Panc1 (cell line): ENCODE measurements at regions of chr7 and their contacts with region 1.

Region 1: DNA sequence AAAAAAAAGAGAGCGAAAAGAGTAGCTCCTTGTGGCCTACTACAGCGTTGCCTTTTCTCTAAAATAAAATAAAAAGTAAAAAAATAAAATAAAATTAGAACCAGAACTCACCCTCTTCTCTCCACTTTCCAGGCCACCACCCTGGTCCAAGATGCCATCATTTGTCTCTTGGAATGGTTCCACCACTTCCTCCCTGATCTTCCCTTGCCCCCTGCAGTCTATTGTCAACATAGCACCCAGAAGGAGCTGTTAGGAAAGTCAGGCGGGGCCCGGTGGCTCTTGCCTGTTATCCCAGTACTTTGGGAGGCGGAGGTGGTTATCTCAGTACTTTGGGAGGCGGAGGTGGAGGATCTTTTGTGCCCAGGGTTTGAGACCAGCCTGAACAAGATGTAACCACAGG is 7.6 kb upstream of the GRID2IP start:
- DNase-seq: no peak
- ATAC-seq: peak; percentile 80
- H3K4me3 ChIP-seq: no peak overlapping the region
- H3K27ac ChIP-seq: no peak overlapping the region
- H3K4me1 ChIP-seq: no peaks in the 10 kb centered on the region
- H3K27me3 ChIP-seq: no peaks in the 10 kb centered on the region
- CTCF ChIP-seq: no peak; the same call in 1 of the 2 replicates

Region 2: GRCh38 chr7:5053175-5053574 is 1505.7 kb before region 1 on chr7:
- CTCF ChIA-PET with region 1: no interaction called
- POLR2A ChIA-PET with region 1: no interaction called
- in situ Hi-C with region 1: no loop called
- intact Hi-C with region 1: no loop called
- DNase-seq: no peak
- ATAC-seq: no peak
- H3K4me3 ChIP-seq: no peak overlapping the region
- H3K27ac ChIP-seq: no peak overlapping the region
- H3K4me1 ChIP-seq: no peaks in the 10 kb centered on the region
- H3K27me3 ChIP-seq: no peaks in the 10 kb centered on the region
- CTCF ChIP-seq: no peak

Region 3: DNA sequence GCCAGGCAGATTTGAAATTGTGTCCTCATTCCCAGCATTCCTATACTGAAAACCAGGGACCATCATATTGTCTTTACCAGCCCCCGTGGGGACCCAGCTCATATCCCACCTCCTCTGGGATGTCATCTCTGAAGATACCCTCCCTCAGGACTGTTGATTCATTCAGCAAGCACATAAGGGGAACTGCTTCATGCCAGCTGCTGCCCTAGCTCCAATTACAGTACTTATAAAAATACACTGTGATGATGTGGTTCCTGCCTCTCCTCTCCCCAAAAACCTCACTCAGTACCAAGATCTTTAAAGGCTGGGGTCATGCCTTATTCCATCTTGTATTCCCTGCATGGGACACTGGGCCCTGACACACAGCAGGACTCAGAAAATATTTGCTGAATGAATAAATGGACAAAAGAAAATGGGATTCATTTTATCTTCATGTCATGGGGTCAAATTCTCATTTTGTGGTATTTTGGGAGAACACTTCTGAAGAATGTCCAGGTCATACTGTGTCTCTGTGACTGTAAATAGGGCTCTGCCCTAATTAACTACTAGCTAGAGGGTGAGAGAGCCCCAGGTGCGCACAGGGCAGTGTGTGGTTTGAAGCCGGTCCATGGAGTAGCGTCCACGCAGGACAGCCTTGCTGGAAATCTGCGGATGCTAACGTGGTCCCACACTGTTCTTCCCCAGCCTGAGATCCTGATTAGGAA is 82.1 kb before region 1 on chr7:
- CTCF ChIA-PET with region 1: no interaction called
- POLR2A ChIA-PET with region 1: no interaction called
- in situ Hi-C with region 1: no loop called
- intact Hi-C with region 1: no loop called
- DNase-seq: no peak
- ATAC-seq: peak; percentile 43; the same call in 1 of the 2 replicates
- H3K4me3 ChIP-seq: no peak overlapping the region
- H3K27ac ChIP-seq: no peak overlapping the region
- H3K4me1 ChIP-seq: peaks cover 3% of the 10 kb centered on the region
- H3K27me3 ChIP-seq: no peaks in the 10 kb centered on the region
- CTCF ChIP-seq: no peak

Region 4: DNA sequence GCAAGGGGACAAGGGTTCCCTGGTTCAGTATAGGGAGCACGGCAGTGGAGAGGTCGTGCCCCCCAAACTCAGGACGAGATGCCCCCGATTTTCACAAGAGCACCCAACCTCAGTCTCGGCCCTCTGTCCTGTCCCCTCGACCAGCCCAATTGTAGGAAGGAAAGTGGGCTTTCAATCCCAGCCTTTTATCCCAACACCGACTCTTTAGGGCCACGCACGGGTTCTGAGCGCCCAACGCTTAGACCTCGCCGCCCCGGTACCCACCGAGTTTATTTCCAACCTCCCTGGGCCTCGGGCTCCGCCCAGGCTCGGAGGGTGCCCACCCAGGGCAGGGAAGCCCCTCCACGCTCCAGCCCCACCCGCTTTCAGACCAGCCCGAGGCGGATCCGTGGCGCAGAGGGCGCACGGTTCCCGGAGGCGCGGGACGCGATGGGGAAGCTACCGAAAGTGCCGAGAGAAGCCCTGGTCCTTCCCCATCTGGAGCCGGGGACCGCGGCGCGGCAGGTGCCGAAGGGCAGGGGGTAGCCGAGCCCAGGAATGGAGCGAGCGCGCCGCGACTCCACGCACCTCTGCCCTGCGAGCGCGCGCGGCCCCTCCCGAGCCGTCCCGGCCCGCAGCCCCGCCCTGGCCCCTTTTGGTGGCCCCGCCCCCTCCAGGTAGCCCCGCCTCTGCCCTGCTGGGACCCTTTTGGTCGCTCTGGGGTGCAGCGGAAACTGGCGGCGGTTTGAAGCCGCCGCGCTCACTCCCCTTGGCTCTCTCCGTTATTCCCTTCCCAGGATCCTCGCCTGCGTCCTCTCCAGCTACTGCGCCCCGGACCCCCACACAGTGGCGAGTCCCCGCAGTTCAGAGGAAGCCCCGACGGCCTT is 28.0 kb before region 1 on chr7:
- CTCF ChIA-PET with region 1: interaction called, 16 read pairs
- POLR2A ChIA-PET with region 1: no interaction called
- in situ Hi-C with region 1: no loop called
- intact Hi-C with region 1: no loop called
- DNase-seq: no peak
- ATAC-seq: peak; percentile 33
- H3K4me3 ChIP-seq: peak overlapping the region; percentile 49 to 63
- H3K27ac ChIP-seq: no peak overlapping the region
- H3K4me1 ChIP-seq: peaks cover 4% of the 10 kb centered on the region; the same call in 1 of the 2 replicates
- H3K27me3 ChIP-seq: peaks cover 6% of the 10 kb centered on the region; the same call in 1 of the 2 replicates
- CTCF ChIP-seq: no peak

Region 5: DNA sequence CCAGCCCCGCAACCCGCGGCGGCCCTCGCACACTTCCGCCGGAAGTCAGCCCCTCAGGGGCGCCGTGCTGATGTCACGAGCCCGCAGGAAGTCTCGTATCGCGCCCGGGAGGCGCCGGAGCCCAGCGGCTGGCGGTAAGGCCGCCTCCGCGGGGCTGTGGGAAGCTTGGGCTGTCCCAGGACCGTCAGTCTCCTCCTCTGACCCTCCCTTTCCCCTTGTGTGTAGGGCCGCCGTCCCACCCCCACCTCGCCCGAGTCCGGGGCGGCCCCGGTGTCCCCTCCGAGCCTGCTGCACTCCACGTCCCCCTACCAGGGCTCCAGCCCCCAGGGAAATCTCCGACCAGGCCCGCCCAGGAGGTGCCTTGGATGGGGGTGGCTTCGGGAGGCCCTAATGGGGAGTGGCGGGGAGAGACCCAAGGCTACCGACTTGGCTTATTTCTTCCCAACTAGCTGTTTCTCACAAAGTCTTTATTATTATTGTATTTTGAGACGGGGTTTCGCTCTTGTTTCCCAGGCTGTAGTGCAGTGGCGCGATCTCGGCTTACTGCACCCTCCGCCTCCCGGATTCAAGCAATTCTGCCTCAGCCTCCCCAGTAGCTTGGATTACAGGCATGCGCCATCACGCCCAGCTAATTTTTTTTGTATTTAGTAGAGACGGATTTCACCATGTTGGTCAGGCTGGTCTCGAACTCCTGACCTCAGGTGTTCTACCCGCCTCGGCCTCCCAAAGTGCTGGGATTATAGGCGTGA is 18.7 kb after region 1 on chr7 and contains the start of gene ZDHHC4:
- CTCF ChIA-PET with region 1: interaction called, 12 read pairs
- POLR2A ChIA-PET with region 1: no interaction called
- in situ Hi-C with region 1: no loop called
- intact Hi-C with region 1: no loop called
- DNase-seq: no peak
- ATAC-seq: peak; percentile 99
- H3K4me3 ChIP-seq: peak within 1 kb of the TSS; percentile 79 to 94
- H3K27ac ChIP-seq: peak within 1 kb of the TSS; percentile 93
- H3K4me1 ChIP-seq: peaks cover 17% of the 10 kb centered on the region
- H3K27me3 ChIP-seq: no peaks in the 10 kb centered on the region
- CTCF ChIP-seq: no peak
- total RNA-seq, gene ZDHHC4: 113 TPM